Posterior vena cava (tissue), 2 donors: ENCODE measurements at regions of chr17 and their contacts with region 1.

Region 1: DNA sequence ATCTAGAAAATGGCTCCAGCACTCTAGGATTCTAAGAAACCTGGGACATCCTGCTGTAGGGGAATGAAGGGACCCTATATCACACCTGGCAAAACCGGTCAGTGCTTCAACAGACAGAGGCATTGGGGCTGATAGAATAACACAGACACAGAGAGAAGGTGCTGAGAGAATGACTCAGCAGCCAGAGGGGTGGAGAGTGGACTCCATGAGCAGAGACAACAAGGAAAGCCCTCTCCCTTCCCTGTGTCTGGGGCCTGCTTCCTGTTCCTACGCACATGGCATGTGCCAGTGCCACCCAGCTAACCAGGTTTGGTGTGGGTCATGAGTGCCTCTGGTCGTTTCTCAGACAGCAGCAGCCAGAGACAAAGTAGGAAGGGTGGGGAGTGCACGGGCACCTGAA is 140.3 kb downstream of the CCT6B start:
- DNase-seq: no peak

Region 2: DNA sequence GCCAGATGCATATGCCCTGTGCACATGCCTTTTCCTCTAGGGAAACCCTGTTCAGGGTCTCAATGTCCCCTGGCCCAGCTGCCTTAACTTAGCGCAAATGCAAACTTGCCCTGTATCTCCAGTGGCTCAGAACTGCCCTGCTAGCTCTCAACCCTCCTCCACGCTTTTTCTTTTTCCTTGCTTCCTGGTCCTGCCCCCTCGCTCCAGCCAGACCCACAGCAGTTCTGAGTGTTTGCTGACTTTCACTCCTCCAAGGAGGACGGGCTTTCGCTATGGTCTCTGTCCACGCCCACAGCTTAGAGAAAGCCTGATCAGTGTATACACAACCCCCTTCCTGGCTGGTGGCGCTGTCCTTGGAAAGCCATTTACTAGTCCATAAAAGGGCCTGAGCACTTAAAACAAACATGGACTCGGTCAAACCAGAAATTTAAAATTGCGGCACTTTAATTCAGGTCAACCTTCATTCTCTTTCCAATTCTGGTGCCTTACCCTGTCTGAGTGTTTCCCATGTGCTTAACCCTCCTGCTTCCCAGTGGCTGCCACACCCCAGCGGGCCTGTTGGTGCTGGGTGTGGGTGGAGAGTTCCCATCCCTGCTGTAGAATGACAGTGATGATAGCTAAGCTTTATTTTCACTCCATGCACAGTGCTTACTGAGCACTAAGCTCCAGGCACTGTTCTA is 1908.6 kb before region 1 on chr17:
- intact Hi-C with region 1: no loop called
- DNase-seq: peak; percentile 91

Region 3: GRCh38 chr17:34858591-34859565 is 38.0 kb after region 1 on chr17:
- intact Hi-C with region 1: no loop called
- DNase-seq: peak; percentile 19

Region 4: DNA sequence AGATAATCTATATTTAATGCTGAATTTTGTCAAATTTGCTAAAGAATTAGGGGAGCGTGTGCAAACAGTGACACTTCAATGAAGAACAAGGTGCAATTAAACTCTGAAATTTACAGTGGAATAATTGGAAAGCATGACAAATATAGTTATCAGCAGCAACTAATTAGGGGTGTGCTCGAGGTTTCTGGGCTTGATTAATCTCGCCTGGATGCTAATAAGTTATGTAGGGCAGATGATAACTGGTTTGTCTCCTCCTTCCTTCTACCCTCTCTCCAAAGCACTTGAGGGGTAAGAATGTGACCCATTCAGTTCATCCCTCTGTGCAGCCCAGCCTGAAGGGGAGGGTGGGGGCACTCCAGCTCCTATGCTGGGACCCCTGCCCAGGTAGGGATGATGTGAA is 1802.4 kb after region 1 on chr17:
- intact Hi-C with region 1: loop called in 1 of 2 experiments (anchors 5 kb)
- DNase-seq: no peak